ENCODE measurements at regions of chr12 and their contacts with region 1.

Region 1: DNA sequence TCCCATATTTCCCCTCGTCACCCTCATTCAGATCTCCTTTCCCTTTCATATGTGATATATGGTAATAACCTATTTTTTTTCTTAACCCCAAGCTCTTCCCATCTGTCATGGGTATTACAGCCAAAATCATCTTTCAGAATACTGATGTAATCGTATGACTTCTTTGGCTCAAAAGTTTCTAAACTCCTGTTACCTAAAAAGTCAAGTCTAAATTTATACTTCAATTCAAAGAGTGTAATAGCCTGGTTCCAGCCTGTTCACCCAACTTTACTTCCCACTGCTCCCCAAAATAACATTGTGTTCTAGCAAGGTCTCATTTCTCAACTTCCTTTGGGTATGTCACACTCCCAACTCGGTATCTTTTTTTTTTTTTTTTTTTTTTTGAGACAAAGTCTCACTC is 48.5 kb downstream of the TBK1 start:
- DNase-seq: no peak
- ATAC-seq: no peak
- H3K4me3 ChIP-seq: no peak overlapping the region
- H3K4me3 Mint-ChIP-seq: no peak overlapping the region
- H3K27ac ChIP-seq: no peak overlapping the region
- H3K27ac Mint-ChIP-seq: no peak overlapping the region
- H3K4me1 ChIP-seq: no peaks in the 10 kb centered on the region
- H3K4me1 Mint-ChIP-seq: peaks cover 0 to under 1% (median under 1%) of the 10 kb centered on the region in 3 donors
- H3K27me3 ChIP-seq: no peaks in the 10 kb centered on the region
- H3K27me3 Mint-ChIP-seq: no peaks in the 10 kb centered on the region

Region 2: DNA sequence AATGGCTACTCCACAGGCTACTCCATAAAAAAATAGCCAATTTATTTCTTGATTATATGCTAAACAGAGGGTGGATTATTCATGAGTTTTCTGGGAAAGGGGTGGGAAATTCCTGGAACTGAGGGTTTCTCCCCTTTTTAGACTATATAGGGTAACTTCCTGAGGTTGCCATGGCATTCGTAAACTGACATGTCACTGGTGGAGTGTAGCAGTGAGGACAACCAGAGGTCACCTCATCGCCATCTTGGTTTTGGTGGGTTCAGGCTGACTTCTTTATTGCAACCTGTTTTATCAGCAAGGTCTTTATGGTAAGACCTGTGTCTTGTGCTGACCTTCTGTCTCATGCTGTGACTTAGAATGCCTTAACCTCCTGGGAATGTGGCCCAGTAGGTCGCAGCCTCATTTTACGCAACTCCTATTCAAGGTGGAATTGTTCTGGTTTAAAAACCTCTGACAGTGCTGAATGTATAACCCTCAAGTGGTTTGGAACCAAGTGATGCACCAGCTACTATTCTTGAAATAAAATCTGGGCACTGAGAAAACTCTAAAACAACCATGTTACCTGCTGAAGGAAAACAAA is 137.6 kb before region 1 on chr12:
- CTCF ChIA-PET with region 1: no interaction called
- POLR2A ChIA-PET with region 1: interaction called in 1 of 2 experiments, 15 read pairs
- DNase-seq: no peak
- ATAC-seq: no peak
- H3K4me3 ChIP-seq: no peak overlapping the region
- H3K4me3 Mint-ChIP-seq: no peak overlapping the region
- H3K27ac ChIP-seq: no peak overlapping the region
- H3K27ac Mint-ChIP-seq: no peak overlapping the region
- H3K4me1 ChIP-seq: no peaks in the 10 kb centered on the region
- H3K4me1 Mint-ChIP-seq: no peaks in the 10 kb centered on the region
- H3K27me3 ChIP-seq: no peaks in the 10 kb centered on the region
- H3K27me3 Mint-ChIP-seq: no peaks in the 10 kb centered on the region

Measured in T-cell (primary cell).